Psoas muscle (tissue), 8 donors: ENCODE measurements at regions of chr9 and their contacts with region 1.

Region 1: DNA sequence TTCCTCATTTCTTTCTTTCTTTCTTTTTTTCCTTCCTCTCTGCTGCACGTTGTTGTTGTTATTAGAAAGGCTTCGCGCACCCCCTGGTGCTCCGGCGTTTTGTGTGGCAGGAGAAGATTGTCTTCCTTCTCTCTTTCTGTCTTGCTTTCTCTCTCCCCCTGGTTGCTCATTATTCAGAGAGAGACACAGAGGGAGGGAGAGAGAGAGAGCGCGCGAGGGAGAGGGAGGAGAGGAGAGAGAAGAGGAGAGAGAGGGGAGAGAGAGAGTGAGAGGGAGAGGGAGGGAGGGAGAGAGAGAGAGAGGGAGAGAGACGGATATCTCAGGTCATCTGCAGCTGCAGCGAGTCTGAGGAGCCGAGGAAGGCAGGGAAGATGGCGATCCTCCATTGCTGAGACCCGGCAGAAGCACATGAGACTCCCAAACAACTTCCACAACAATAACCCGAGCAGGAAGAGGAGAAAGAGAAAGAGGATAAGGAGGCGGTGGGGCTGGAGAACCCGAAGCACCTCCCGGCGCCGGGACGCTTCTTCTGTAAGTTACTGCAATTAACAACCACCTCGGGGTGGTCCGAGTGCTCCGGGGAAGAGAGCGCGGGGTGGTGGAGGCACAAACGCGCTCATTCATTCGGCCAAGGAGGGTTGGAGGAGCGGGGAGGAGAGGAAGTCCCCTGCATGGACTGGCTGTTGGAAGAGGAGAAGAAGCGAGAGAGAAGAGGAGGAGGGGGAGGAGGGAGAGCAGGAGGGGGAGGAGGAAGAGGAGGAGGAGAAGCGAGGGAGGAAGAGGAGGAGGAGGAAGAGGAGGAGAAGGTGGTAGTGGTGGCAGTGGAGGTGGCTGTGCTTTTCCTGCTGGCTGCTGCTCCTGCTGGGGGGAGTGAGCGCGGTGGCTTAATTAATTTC is at the start of gene ZNF462:
- DNase-seq: peak; percentile 43 to 72
- ATAC-seq: peak; percentile 52 to 64 (median 59)
- H3K4me3 ChIP-seq: peak within 1 kb of the TSS; percentile 79
- H3K27ac ChIP-seq: peak within 1 kb of the TSS; percentile 95
- H3K4me1 ChIP-seq: peaks cover 13% of the 10 kb centered on the region
- H3K27me3 ChIP-seq: no peaks in the 10 kb centered on the region
- CTCF ChIP-seq: peak; percentile 16
- total RNA-seq, gene ZNF462: 16.3 to 102 (median 24.6) TPM

Region 2: GRCh38 chr9:105901514-105902109 is 961.5 kb before region 1 on chr9:
- intact Hi-C with region 1: loop called (anchors 5 to 10 kb)
- DNase-seq: peak; percentile 29 to 62
- ATAC-seq: peak; percentile 96 to 98 (median 96)
- H3K4me3 ChIP-seq: no peak overlapping the region
- H3K27ac ChIP-seq: no peak overlapping the region
- H3K4me1 ChIP-seq: peaks cover 4% of the 10 kb centered on the region
- H3K27me3 ChIP-seq: no peaks in the 10 kb centered on the region
- CTCF ChIP-seq: peak; percentile 78

Region 3: DNA sequence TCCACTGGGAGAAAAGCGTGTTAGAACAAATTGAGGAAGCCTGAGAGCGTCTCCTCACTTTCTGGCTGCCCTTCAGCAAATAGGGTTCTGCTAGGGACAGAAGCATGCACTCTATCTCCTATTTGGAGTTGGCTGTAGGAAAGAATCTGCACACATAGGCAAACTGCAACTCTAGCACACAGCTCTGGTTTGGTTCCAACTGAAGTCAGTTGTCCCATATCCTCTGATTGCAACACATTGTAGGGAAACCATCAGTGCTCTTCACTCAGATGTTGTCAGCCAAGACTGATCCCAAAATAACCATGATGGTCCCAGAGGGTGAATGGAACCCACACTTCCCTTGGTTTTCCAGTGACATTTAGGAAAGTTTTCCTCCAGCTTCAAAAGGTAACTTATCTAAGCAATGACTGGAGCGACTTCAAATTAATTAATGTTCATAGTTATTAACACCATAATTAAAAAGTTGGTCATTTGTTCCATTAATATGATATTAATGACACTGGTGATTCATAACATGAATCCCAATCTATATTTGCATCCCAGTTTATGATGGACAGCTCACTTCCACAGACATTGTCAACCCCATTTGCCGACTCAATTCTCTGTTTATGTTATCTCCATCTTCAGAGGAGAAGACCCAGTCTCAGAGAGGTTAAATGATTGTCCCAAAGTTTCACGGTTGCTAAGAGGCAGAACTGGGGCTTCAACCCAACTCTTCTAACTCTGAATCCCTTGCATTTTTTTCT is 136.8 kb before region 1 on chr9:
- intact Hi-C with region 1: loop called in 1 of 2 experiments (anchors 5 kb)
- DNase-seq: peak in 1 of 2 donors; percentile 10
- ATAC-seq: peak; percentile 85 to 96 (median 94)
- H3K4me3 ChIP-seq: no peak overlapping the region
- H3K27ac ChIP-seq: peak overlapping the region; percentile 87
- H3K4me1 ChIP-seq: peaks cover 29% of the 10 kb centered on the region
- H3K27me3 ChIP-seq: no peaks in the 10 kb centered on the region
- CTCF ChIP-seq: no peak

Region 4: DNA sequence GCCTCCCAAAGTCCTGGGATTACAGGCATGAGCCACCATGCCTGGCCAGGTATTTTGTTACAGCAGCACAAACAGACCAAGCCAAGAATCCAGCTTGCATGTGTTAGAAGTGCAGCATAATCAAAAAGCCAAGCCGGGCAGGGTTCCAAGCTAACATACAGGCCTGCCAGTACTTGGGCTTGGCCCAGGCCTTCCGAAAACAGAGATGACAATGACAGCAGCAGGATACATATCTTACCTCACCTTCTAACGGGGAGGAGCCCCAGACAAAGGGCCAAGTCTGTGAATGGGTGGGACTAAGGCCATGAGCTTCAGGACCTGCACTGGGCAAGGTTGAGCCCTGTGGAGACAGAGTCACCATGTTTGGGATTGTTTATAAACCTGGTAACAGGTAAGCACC is 91.4 kb before region 1 on chr9:
- intact Hi-C with region 1: loop called in 1 of 2 experiments (anchors 5 kb)
- DNase-seq: peak; percentile 73 to 84
- ATAC-seq: peak; percentile 88 to 96 (median 94)
- H3K4me3 ChIP-seq: peak overlapping the region; percentile 47
- H3K27ac ChIP-seq: peak overlapping the region; percentile 90
- H3K4me1 ChIP-seq: peaks cover 30% of the 10 kb centered on the region
- H3K27me3 ChIP-seq: no peaks in the 10 kb centered on the region
- CTCF ChIP-seq: no peak

Region 5: GRCh38 chr9:106820866-106821265 is 42.2 kb before region 1 on chr9:
- intact Hi-C with region 1: no loop called
- DNase-seq: no peak
- ATAC-seq: no peak
- H3K4me3 ChIP-seq: no peak overlapping the region
- H3K27ac ChIP-seq: no peak overlapping the region
- H3K4me1 ChIP-seq: no peaks in the 10 kb centered on the region
- H3K27me3 ChIP-seq: no peaks in the 10 kb centered on the region
- CTCF ChIP-seq: no peak

Region 6: DNA sequence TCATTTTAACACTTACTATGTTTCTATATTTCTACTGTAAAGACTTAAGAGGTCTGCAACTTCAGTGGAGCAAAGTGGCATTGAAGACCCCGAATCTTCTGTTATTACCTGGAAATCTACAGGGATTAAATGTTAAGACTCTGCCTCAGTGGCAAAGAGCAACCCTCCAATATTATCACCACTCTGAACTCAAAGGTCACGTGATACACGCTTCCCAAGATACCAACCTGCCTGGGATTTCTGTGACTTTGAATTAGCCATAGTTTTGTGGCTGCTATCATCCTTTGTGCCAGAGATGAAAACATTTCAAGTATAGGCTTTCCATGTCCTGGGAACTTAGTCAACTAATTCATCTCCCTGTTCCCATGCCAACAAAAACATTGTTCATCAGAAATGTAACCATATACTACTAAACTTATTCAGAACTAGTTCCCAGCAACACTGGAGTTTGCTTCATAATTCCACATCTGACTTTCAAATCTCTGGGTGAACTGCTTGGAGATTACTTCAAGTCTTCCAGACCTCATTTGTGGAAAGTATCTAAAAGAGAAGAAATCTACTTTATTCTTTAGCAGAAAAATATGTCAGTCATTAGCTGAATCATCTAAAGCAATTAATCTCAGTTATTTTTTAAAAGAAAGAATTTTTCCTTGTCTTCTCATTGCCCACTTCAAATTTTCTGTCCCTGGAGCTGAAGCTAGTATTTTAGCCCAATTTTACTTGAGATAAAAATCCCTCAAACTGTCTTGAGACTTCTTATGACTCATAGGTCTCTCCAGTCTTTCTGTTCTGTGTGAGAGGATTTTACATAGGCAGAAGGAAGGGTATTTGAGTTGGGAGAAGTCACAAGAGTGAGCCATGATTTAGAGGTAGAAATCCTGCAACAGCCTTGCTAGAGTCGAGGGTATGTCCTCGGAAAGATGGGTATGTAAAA is 82.9 kb after region 1 on chr9:
- intact Hi-C with region 1: no loop called
- DNase-seq: no peak
- ATAC-seq: peak in 1 of 4 donors; percentile 49
- H3K4me3 ChIP-seq: no peak overlapping the region
- H3K27ac ChIP-seq: peak overlapping the region; percentile 56
- H3K4me1 ChIP-seq: peaks cover 14% of the 10 kb centered on the region
- H3K27me3 ChIP-seq: no peaks in the 10 kb centered on the region
- CTCF ChIP-seq: no peak

Region 7: GRCh38 chr9:107137495-107138202 is 274.6 kb after region 1 on chr9:
- intact Hi-C with region 1: loop called in 1 of 2 experiments (anchors 10 kb)
- DNase-seq: no peak
- ATAC-seq: peak; percentile 65 to 77 (median 70)
- H3K4me3 ChIP-seq: peak overlapping the region; percentile 15
- H3K27ac ChIP-seq: peak overlapping the region; percentile 30
- H3K4me1 ChIP-seq: peaks cover 16% of the 10 kb centered on the region
- H3K27me3 ChIP-seq: no peaks in the 10 kb centered on the region
- CTCF ChIP-seq: peak; percentile 65